ENCODE measurements at regions of chr2 and their contacts with region 1.

Region 1: GRCh38 chr2:201231781-201232466 is 28.4 kb upstream of the CASP8 start:
- DNase-seq: peak; percentile 90
- H3K4me3 ChIP-seq: no peak overlapping the region
- H3K27ac ChIP-seq: no peak overlapping the region
- H3K4me1 ChIP-seq: peaks cover 25% of the 10 kb centered on the region
- H3K27me3 ChIP-seq: no peaks in the 10 kb centered on the region
- CTCF ChIP-seq: peak; percentile 96

Region 2: DNA sequence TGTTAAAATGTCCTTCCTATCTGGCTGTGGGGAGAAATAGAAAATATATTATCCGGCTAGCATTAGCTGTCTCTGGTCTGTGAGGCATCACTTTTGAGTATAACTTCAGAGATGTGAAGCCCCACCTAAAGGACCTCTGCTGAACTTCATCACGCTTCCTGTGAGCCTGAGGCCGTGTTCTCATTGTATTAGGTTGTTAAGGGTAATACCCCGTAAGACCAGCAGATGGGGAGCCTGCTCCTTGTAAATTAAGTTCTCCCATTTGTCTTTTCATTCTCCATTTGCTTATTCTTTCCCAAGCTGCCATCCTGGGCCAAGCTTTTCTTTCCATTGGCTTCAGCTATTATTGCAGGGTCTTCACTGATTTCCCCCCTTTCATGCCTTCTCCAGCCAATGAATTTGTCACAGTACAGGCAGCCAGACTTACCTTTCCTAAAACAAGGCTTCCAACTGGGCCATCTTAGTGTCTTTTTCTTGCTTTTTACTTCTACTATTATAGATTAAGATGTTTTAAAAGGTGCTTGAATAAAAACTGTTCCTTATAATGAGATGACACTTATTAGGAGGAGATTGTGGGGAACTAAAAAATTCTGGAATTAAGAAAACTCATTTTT is 330.4 kb before region 1 on chr2:
- CTCF ChIA-PET with region 1: no interaction called
- dilution Hi-C with region 1: no loop called
- in situ Hi-C with region 1: no loop called
- intact Hi-C with region 1: loop called (anchors 1 kb)
- DNase-seq: peak; percentile 80
- H3K4me3 ChIP-seq: no peak overlapping the region
- H3K27ac ChIP-seq: no peak overlapping the region
- H3K4me1 ChIP-seq: no peaks in the 10 kb centered on the region
- H3K27me3 ChIP-seq: no peaks in the 10 kb centered on the region
- CTCF ChIP-seq: peak; percentile 73 to 84

Region 3: GRCh38 chr2:201182650-201183364 is 49.1 kb before region 1 on chr2 and contains the start of gene CASP10:
- CTCF ChIA-PET with region 1: interaction called, 13 read pairs
- dilution Hi-C with region 1: no loop called
- in situ Hi-C with region 1: no loop called
- intact Hi-C with region 1: loop called (anchors 1 kb)
- DNase-seq: peak; percentile 82
- H3K4me3 ChIP-seq: peak within 1 kb of the TSS; percentile 42 to 52 (median 45)
- H3K27ac ChIP-seq: peak within 1 kb of the TSS; percentile 56
- H3K4me1 ChIP-seq: peaks cover 5% of the 10 kb centered on the region
- H3K27me3 ChIP-seq: no peaks in the 10 kb centered on the region
- CTCF ChIP-seq: peak; percentile 54 to 62
- total RNA-seq, gene CASP10: 4.5 to 5.7 TPM

Region 4: DNA sequence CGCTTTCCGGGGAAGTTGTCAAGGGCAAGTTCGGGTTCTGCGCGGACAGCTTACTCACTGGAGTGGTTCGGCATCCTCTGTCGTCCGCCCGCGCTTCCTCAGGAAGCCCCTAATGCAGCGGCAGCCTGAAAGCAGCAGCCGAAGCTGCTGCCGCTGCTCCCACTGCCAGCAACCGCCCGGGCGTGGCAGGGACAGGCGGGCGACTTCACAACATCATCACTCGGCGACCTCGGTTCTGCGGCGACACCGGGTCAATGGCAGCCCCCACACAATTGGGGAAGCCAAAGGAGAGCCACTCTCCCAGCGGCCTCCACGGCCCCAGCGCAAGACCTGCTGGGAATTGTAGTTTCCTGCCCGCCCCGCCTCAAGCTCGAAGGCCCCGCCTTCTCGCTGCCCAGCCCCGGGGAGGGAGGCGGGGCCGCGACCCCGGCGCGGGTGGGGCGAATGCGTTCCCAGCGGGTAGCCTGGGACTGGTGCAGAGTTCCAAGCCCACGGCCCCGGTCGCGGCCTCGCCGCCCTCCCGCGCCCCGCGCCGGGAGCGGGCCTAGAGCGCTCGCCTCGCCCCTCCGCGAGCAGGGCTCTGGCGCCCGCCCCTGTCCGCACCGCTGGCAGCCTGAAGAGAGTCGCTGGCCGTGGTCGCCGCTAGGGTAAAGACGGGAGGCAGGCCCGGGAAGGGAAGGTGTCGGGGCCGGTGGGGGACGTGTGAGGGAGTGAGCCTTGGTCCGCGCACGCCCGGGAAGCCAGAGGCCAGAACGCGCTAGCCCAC is 219.6 kb after region 1 on chr2 and contains the starts of genes STRADB and TRAK2:
- CTCF ChIA-PET with region 1: no interaction called
- dilution Hi-C with region 1: no loop called
- in situ Hi-C with region 1: no loop called
- intact Hi-C with region 1: loop called (anchors 5 kb)
- DNase-seq: peak; percentile 91
- H3K4me3 ChIP-seq: peak within 1 kb of the TSS; percentile 60 to 93 (median 88)
- H3K27ac ChIP-seq: peak within 1 kb of the TSS; percentile 72
- H3K4me1 ChIP-seq: peaks cover 20% of the 10 kb centered on the region
- H3K27me3 ChIP-seq: no peaks in the 10 kb centered on the region
- CTCF ChIP-seq: no peak
- total RNA-seq, gene STRADB: 12.8 to 19.2 TPM
- total RNA-seq, gene TRAK2: 18.9 to 28.7 TPM

Region 5: DNA sequence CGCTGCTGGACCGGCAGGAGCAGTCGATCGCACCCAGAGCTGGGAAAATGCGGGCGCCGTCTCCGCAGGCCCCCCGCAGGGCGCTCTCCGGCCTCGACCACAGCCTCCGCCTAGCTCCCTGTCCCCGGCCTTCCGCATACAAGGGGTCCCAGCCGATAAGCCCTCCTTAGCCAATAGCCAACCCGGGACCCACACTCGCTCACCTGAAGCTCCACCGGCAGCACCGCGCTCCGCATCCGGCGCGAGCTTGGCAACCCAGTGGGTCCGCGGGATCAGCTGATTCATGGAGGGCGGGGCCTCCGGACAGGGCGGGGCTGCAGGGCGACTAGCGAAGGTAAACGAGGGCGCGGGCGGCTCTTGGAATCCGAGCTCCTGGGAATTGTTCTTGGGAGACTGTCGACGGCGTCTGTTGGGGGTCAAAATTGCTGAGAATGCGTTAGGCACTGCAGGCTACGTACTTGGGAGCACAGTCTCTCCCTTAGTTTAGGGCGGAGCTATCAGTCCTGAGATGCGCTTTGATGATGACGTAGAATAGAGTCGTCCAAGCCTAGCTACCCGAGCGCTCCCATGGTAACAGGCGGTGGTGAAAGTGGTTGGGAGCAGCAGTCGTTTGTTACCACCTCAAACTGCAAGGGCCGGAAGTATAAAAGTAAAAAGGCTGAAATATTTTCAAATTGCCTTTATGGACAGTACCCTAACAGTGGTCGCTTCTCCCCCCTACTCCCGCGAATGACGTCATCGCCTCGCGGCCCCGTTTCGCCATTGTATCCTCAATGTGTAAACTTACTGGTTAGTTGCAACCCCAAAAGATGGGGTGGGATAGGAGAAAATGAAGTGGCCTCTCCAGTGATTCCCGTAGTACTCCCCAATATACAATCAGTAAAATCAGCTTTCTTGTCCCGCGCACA is 549.0 kb after region 1 on chr2 and contains the start of gene ALS2:
- CTCF ChIA-PET with region 1: no interaction called
- dilution Hi-C with region 1: no loop called
- in situ Hi-C with region 1: no loop called
- intact Hi-C with region 1: loop called (anchors 5 kb)
- DNase-seq: peak; percentile 99
- H3K4me3 ChIP-seq: peak within 1 kb of the TSS; percentile 73 to 95 (median 85)
- H3K27ac ChIP-seq: peak within 1 kb of the TSS; percentile 93
- H3K4me1 ChIP-seq: peaks cover 22% of the 10 kb centered on the region
- H3K27me3 ChIP-seq: no peaks in the 10 kb centered on the region
- CTCF ChIP-seq: no peak
- total RNA-seq, gene ALS2: 46.2 to 53.3 TPM